T-cell (primary cell): ENCODE measurements at regions of chr17 and their contacts with region 1.

Region 1: GRCh38 chr17:35969558-35970380 is 11.5 kb downstream of the CCL16 start:
- DNase-seq: peak; percentile 20 to 83 (median 60)
- ATAC-seq: peak in 3 of 4 experiments; percentile 28 to 64 (median 53)
- H3K4me3 ChIP-seq: no peak overlapping the region
- H3K4me3 Mint-ChIP-seq: no peak overlapping the region
- H3K27ac ChIP-seq: no peak overlapping the region
- H3K27ac Mint-ChIP-seq: no peak overlapping the region
- H3K4me1 ChIP-seq: peaks cover 0 to 5% of the 10 kb centered on the region in 2 experiments
- H3K4me1 Mint-ChIP-seq: peaks cover 0 to 4% (median 2%) of the 10 kb centered on the region in 3 donors
- H3K27me3 ChIP-seq: no peaks in the 10 kb centered on the region
- H3K27me3 Mint-ChIP-seq: no peaks in the 10 kb centered on the region

Region 2: DNA sequence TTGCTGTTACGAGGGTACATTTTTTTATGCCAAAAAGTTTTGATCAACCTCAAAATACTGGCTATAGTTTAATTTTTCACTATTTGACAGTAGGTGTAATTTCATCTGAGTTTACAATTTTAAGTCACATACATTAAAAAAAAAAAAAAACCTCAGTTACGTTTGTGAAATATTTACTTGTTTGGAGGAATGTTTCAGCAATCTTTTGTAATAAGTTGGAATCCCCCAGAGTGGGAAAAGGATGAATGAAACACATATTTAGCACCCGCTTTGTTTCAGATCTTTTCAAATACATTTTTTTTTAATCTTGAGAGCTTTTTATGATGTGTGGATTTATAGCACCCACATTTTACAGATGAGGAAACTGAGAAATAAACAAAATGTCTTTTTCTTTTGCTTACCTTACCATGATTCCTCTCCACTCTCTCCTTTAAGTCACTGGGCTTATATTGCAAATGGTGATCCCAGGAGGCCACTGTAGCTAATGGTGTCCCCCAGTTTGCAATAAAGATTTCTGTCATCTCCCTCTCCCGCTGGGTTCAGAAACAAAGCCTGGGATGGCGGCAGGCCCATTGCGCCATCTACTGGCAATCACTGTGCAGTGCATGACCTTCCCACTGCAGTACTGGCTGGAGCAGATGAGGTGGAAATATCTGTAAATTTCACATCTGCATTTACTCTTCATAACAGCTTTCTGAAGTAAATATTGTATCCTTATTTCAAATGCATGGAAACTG is 179.0 kb after region 1 on chr17:
- CTCF ChIA-PET with region 1: interaction called in 1 of 2 experiments, 19 read pairs
- POLR2A ChIA-PET with region 1: no interaction called
- DNase-seq: peak in 34 of 35 experiments; percentile 18 to 81 (median 52)
- ATAC-seq: peak; percentile 70 to 83 (median 74)
- H3K4me3 ChIP-seq: no peak overlapping the region
- H3K4me3 Mint-ChIP-seq: peak overlapping the region in 2 of 3 donors; percentile 4 to 13
- H3K27ac ChIP-seq: no peak overlapping the region
- H3K27ac Mint-ChIP-seq: no peak overlapping the region
- H3K4me1 ChIP-seq: peaks cover 0 to 12% of the 10 kb centered on the region in 2 experiments
- H3K4me1 Mint-ChIP-seq: peaks cover 0 to 8% (median 5%) of the 10 kb centered on the region in 3 donors
- H3K27me3 ChIP-seq: peaks cover 0 to 12% of the 10 kb centered on the region in 2 experiments
- H3K27me3 Mint-ChIP-seq: peaks cover 22 to 41% of the 10 kb centered on the region in 2 donors